A673 (cell line): ENCODE measurements at regions of chr7 and their contacts with region 1.

Region 1: GRCh38 chr7:144127703-144128334 is 4.8 kb downstream of the OR2A14 start:
- DNase-seq: peak; percentile 85
- H3K4me3 ChIP-seq: no peak overlapping the region
- H3K27ac ChIP-seq: no peak overlapping the region
- H3K4me1 ChIP-seq: no peaks in the 10 kb centered on the region
- H3K27me3 ChIP-seq: no peaks in the 10 kb centered on the region
- CTCF ChIP-seq: peak; percentile 94

Region 2: GRCh38 chr7:143735962-143736361 is 391.9 kb before region 1 on chr7:
- CTCF ChIA-PET with region 1: interaction called, 10 read pairs
- POLR2A ChIA-PET with region 1: no interaction called
- intact Hi-C with region 1: no loop called
- DNase-seq: no peak
- H3K4me3 ChIP-seq: no peak overlapping the region
- H3K27ac ChIP-seq: no peak overlapping the region
- H3K4me1 ChIP-seq: no peaks in the 10 kb centered on the region
- H3K27me3 ChIP-seq: no peaks in the 10 kb centered on the region
- CTCF ChIP-seq: no peak

Region 3: DNA sequence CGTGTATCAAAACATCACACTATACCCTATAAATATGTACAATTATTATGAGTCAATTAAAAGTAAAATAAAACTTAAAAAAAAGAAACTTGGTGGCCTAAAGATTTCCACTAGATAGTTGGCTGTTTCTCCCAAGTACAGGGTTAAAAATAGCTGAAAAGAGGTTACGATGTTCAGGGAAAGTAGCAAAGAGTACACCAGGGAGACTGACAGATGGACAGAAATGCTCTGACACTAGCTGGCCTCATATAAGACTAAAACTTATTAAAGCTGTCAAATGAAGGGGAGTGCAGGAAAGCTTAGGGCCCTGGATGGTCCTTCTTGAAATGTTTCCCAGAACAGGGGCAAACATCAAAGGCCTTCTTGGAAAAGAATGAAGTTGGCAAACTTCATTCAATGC is 277.1 kb before region 1 on chr7:
- CTCF ChIA-PET with region 1: no interaction called
- POLR2A ChIA-PET with region 1: no interaction called
- intact Hi-C with region 1: no loop called
- DNase-seq: no peak
- H3K4me3 ChIP-seq: no peak overlapping the region
- H3K27ac ChIP-seq: no peak overlapping the region
- H3K4me1 ChIP-seq: no peaks in the 10 kb centered on the region
- H3K27me3 ChIP-seq: no peaks in the 10 kb centered on the region
- CTCF ChIP-seq: no peak

Region 4: GRCh38 chr7:143884969-143885559 is 242.8 kb before region 1 on chr7:
- CTCF ChIA-PET with region 1: no interaction called
- POLR2A ChIA-PET with region 1: no interaction called
- intact Hi-C with region 1: no loop called
- DNase-seq: peak; percentile 86
- H3K4me3 ChIP-seq: peak overlapping the region; percentile 80
- H3K27ac ChIP-seq: peak overlapping the region; percentile 61
- H3K4me1 ChIP-seq: peaks cover 21% of the 10 kb centered on the region
- H3K27me3 ChIP-seq: no peaks in the 10 kb centered on the region
- CTCF ChIP-seq: no peak

Region 5: GRCh38 chr7:143901668-143902331 is 226.0 kb before region 1 on chr7 and contains the start of gene TCAF1:
- CTCF ChIA-PET with region 1: interaction called, 8 read pairs
- POLR2A ChIA-PET with region 1: no interaction called
- intact Hi-C with region 1: loop called (anchors 10 kb)
- DNase-seq: peak; percentile 96
- H3K4me3 ChIP-seq: peak within 1 kb of the TSS; percentile 75
- H3K27ac ChIP-seq: peak within 1 kb of the TSS; percentile 77
- H3K4me1 ChIP-seq: no peaks in the 10 kb centered on the region
- H3K27me3 ChIP-seq: no peaks in the 10 kb centered on the region
- CTCF ChIP-seq: peak; percentile 43
- total RNA-seq, gene TCAF1: 38.6 and 44.5 TPM in 2 replicates